ENCODE measurements at regions of chr1 and their contacts with region 1.

Region 1: GRCh38 chr1:43206600-43207228 is 34.6 kb downstream of the CFAP57 start:
- DNase-seq: peak; percentile 93
- H3K4me3 ChIP-seq: peak overlapping the region; percentile 38
- H3K27ac ChIP-seq: peak overlapping the region; percentile 97
- H3K27me3 ChIP-seq: no peaks in the 10 kb centered on the region
- CTCF ChIP-seq: no peak

Region 2: DNA sequence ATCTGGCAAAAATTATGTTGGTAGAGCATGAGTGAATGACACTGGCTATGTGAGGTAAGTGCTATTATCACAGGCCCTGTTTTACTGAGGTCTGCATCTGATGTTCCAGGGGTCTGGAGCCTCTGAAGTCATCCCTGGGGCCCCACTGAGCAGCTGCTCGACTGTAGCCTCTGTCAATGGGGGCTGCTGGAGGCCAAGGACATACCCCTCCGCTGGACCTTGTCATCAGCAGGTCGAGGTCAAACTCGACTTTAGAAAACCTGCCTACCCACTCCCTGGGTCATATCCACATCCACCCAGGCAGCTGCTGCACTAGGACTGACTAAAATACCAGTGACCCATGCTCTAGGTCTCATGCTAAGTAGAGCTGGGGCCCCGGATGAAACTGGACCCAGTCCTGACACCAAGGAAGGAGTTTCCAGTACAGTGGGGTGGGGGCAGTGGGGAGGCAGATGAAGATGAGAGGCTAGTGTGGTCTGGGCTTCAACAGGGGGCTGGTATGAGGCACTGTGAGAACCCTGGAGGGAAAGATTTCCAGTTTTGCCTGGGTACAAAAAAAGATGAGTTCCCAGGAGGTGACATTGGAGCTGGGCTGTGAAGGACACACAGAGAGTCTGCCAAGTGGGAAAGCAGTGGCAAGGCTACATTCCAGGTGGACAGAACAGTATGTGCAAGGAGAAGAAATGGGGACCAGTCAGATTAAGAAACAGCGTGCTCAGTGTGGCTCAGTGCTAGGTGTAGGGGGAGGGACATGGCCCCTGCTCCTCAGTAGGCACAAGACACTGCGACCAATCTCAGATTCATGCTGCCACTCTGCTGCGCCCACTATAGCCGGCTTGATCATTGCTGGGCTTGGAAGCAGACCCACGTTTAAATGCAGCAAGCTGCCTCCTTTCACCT is 260.5 kb before region 1 on chr1:
- CTCF ChIA-PET with region 1: no interaction called
- POLR2A ChIA-PET with region 1: interaction called, 20 read pairs
- DNase-seq: no peak
- H3K4me3 ChIP-seq: no peak overlapping the region
- H3K27ac ChIP-seq: peak overlapping the region; percentile 47
- H3K27me3 ChIP-seq: no peaks in the 10 kb centered on the region
- CTCF ChIP-seq: no peak

Region 3: DNA sequence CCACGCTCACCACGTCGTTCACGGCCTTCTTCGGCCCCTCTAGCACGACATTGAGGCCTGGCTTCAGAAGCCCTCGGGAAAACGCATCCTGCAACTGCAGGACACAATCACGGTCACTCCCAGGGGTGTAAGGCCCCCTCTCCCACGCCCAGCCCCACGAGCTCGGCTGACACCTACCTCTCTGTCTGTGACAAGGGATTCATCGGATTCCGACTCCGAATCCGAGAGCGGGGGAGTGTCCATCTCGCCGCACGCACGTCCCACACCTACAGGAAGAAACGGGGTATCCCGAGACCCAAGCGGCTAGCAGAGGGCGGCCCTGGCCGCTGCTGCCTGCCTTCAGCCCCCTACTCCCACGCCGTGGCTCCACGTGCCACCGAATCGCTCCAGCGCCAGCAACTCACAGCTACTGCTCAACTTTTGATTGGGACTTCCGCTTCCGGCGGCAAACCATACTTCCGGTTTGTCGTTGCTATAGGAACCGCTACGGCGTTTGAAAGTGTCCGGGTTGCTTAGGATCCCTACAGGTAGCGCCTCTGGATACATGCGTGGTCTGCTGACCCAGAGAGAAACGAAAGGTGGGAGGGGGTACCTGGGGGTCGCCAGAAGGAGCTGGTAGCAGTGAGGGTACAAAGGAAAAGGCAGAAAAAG is 34.7 kb before region 1 on chr1 and contains the starts of genes CFAP57 and EBNA1BP2:
- CTCF ChIA-PET with region 1: interaction called, 3 read pairs
- POLR2A ChIA-PET with region 1: interaction called, 17 read pairs
- DNase-seq: peak; percentile 76
- H3K4me3 ChIP-seq: peak within 1 kb of the TSS; percentile 97
- H3K27ac ChIP-seq: no peak within 1 kb of the TSS
- H3K27me3 ChIP-seq: peaks cover under 1% of the 10 kb centered on the region
- CTCF ChIP-seq: no peak
- polyA plus RNA-seq, gene CFAP57: 0.55 and 0.58 TPM in 2 replicates
- polyA plus RNA-seq, gene EBNA1BP2: 61.6 and 62.0 TPM in 2 replicates

Region 4: DNA sequence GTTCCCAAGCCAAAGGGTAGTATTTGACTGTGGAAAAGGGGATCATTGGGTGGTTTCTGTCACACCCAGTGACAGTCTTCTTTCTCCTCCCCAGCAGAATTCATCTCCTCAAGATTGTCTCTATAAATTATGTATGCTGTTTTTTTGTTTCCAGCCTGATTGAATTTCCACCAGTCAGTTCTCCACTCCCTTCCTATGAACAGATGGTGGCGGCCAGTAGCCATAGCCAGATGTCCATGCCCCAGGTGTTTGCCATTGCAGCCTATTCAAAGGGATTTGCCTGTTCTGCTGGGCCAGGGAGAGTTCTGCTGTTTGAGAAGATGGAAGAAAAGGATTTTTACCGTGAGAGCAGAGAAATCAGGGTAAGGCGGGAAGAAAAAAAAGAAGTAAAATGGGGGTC is 21.7 kb before region 1 on chr1:
- CTCF ChIA-PET with region 1: no interaction called
- POLR2A ChIA-PET with region 1: no interaction called
- DNase-seq: no peak
- H3K4me3 ChIP-seq: no peak overlapping the region
- H3K27ac ChIP-seq: no peak overlapping the region
- H3K27me3 ChIP-seq: no peaks in the 10 kb centered on the region
- CTCF ChIP-seq: no peak

Measured in AG04450 (cell line).